ENCODE measurements at regions of chr2 and their contacts with region 1.

Region 1: GRCh38 chr2:157743051-157743450 is 114.4 kb upstream of the ACVR1C start:
- DNase-seq: no peak
- ATAC-seq: no peak
- H3K4me3 ChIP-seq: no peak overlapping the region
- H3K27ac ChIP-seq: peak overlapping the region; percentile 69 to 90 (median 78)
- H3K4me1 ChIP-seq: peaks cover 12 to 56% of the 10 kb centered on the region in 2 donors
- H3K27me3 ChIP-seq: no peaks in the 10 kb centered on the region
- CTCF ChIP-seq: no peak
- POLR2A ChIP-seq: no peak

Region 2: DNA sequence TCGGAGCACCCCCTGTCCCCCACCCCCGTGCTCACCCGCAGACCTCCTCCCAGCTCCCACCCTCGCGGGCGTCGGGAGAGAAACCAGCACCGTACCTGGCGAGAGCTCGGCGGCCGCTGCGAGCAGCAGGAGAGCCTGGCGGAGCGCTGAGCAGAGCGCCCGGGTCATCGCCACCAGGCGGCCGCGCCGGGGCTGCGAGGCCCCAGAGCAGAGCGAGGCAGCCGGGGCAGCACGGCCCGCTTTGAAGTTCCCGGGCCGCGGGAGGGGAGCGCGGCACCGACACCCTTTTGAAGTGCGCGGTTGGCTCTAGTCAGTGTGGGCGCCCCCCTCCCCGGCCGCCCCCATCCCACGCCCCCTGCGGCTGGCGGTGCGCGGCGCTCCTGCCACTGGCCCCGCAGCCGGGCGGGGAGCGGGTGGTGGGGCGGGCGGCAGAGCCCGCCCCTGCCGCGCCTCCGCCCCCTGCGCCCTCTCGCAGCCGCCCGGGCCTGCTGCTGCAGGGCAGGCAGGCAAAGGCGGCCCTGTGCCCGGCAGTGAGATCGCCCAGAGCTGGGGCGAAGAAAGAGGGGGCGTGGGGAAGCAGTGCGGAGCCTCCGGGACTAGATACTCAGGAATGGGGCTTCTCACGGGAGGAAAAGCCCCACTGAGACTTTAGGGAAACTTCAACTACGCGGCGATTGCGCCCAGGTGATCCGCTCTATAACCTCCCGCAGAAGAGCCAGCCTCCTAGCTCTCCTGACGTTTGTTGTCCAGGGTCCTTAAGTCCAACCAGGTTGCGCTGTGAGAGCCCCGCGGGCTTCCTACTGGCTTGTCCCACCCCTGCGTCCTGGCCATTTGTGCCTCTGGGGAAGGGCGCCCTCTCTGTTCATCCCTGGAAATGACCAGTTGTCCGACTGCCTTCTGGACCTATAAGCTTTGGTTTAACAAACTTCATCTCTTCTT is 114.3 kb before region 1 on chr2 and contains the start of gene ACVR1C:
- in situ Hi-C with region 1: no loop called
- intact Hi-C with region 1: loop called (anchors 5 kb)
- DNase-seq: peak; percentile 40 to 49
- ATAC-seq: peak; percentile 74 to 84
- H3K4me3 ChIP-seq: peak within 1 kb of the TSS; percentile 57 to 67 (median 62)
- H3K27ac ChIP-seq: peak within 1 kb of the TSS; percentile 33 to 59 (median 40)
- H3K4me1 ChIP-seq: peaks cover 0 to 6% of the 10 kb centered on the region in 2 donors
- H3K27me3 ChIP-seq: no peaks in the 10 kb centered on the region
- CTCF ChIP-seq: peak; percentile 13 to 61 (median 37)
- POLR2A ChIP-seq: peak in 1 of 2 donors; percentile 20
- total RNA-seq, gene ACVR1C: 0.46 to 2.1 (median 0.90) TPM

Region 3: GRCh38 chr2:157662401-157662800 is 80.7 kb before region 1 on chr2:
- in situ Hi-C with region 1: no loop called
- intact Hi-C with region 1: no loop called
- DNase-seq: no peak
- ATAC-seq: no peak
- H3K4me3 ChIP-seq: no peak overlapping the region
- H3K27ac ChIP-seq: no peak overlapping the region
- H3K4me1 ChIP-seq: no peaks in the 10 kb centered on the region
- H3K27me3 ChIP-seq: no peaks in the 10 kb centered on the region
- CTCF ChIP-seq: no peak
- POLR2A ChIP-seq: no peak

Region 4: GRCh38 chr2:157789933-157790511 is 47.0 kb after region 1 on chr2:
- in situ Hi-C with region 1: no loop called
- intact Hi-C with region 1: no loop called
- DNase-seq: peak; percentile 92 to 94
- ATAC-seq: peak; percentile 80 to 90
- H3K4me3 ChIP-seq: peak overlapping the region; percentile 3 to 27 (median 20)
- H3K27ac ChIP-seq: peak overlapping the region; percentile 88 to 94 (median 91)
- H3K4me1 ChIP-seq: peaks cover 83 to 96% of the 10 kb centered on the region in 2 donors
- H3K27me3 ChIP-seq: no peaks in the 10 kb centered on the region
- CTCF ChIP-seq: no peak
- POLR2A ChIP-seq: no peak

Measured in gastrocnemius medialis (tissue), 4 donors.